ENCODE measurements at regions of chr9 and their contacts with region 1.

Region 1: DNA sequence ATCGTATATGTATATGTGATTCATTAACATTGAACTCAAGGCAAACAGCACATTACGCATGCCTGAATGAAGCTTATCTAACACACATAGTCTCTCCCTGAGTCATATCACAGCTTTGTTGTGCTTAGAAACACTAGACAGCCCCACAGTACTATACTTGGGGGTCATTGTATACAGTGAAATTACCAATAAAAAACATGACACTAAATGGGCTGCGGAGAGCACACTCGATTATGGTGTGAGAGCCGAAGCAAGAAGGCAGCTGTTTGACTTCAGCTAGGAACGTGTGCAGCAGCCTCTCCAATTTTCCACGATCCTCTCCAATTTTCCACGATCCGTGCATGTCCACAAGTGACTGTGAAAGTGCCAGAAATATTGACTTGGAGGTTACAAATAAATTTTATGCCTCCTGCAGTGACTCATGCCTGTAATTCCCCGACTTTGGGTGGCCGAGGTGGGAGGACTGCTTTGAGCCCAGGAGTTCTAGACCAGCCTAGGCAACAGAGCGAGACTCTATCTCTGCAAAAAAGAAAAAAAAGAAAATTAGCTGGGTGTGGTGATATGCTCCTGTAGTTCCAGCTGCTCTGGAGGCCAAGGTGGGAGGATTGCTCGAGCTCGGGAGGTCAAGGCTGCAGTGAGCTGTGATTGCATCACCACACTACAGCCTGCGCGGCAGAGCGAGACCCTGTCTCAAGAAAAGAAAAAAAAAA is 102.4 kb downstream of the DAPK1 start:
- DNase-seq: peak; percentile 43 to 96
- H3K4me3 ChIP-seq: peak overlapping the region; percentile 22; the same call in 1 of the 2 replicates
- H3K27ac ChIP-seq: peak overlapping the region; percentile 56
- H3K4me1 ChIP-seq: peaks cover 52% of the 10 kb centered on the region
- H3K27me3 ChIP-seq: no peaks in the 10 kb centered on the region
- CTCF ChIP-seq: no peak

Region 2: DNA sequence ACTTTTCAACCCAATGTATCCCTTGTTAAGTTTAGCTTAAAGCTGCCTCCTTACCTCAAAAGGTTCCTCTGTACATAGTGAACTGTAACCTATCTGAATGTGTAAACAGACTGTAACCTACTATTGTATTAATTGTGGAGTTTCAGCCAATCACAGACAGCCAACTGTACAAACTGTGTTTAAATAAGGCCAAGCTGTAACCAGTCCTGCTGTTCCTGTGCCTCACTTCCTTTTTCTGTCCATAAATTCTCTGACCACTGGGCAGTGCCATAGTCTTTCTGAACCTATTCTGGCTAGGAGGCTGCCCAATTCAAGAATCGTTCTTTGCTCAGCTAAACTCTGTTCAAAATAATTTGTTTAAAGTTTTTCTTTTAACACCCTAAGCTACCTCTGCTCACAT is 177.1 kb before region 1 on chr9:
- CTCF ChIA-PET with region 1: no interaction called
- POLR2A ChIA-PET with region 1: no interaction called
- intact Hi-C with region 1: loop called (anchors 10 kb)
- DNase-seq: no peak
- H3K4me3 ChIP-seq: no peak overlapping the region
- H3K27ac ChIP-seq: no peak overlapping the region
- H3K4me1 ChIP-seq: peaks cover 11% of the 10 kb centered on the region
- H3K27me3 ChIP-seq: no peaks in the 10 kb centered on the region
- CTCF ChIP-seq: no peak

Region 3: GRCh38 chr9:87502436-87503221 is 97.4 kb before region 1 on chr9:
- CTCF ChIA-PET with region 1: no interaction called
- POLR2A ChIA-PET with region 1: interaction called, 8 read pairs
- intact Hi-C with region 1: loop called (anchors 2 kb)
- DNase-seq: peak; percentile 82 to 98
- H3K4me3 ChIP-seq: peak overlapping the region; percentile 29; the same call in 1 of the 2 replicates
- H3K27ac ChIP-seq: peak overlapping the region; percentile 83
- H3K4me1 ChIP-seq: peaks cover 81% of the 10 kb centered on the region
- H3K27me3 ChIP-seq: no peaks in the 10 kb centered on the region
- CTCF ChIP-seq: no peak

Region 4: DNA sequence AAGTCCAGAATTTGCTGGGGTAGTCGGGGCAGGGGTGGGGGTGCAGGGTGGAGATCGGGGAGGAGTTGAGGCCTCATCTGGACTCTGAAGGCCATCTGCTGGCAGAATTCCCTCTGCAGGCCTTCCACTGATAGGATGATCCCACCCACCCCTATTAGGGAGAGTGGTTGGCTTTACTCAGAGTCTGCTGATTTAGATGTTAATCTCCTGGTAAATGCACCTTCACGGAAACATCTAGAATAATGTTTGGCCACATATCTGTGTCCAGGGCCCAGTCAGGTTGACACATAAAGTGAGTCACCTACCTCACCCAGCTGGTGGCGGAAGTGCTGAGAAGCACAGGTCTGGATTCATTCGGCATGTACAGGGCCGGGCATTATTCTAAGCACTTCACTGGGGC is 52.4 kb before region 1 on chr9:
- CTCF ChIA-PET with region 1: no interaction called
- POLR2A ChIA-PET with region 1: interaction called, 3 read pairs
- intact Hi-C with region 1: loop called (anchors 2 kb)
- DNase-seq: peak; percentile 69 to 80
- H3K4me3 ChIP-seq: no peak overlapping the region
- H3K27ac ChIP-seq: no peak overlapping the region
- H3K4me1 ChIP-seq: peaks cover 17% of the 10 kb centered on the region; the same call in 1 of the 2 replicates
- H3K27me3 ChIP-seq: no peaks in the 10 kb centered on the region
- CTCF ChIP-seq: no peak

Region 5: GRCh38 chr9:87570000-87570908 is 29.8 kb before region 1 on chr9:
- CTCF ChIA-PET with region 1: no interaction called
- POLR2A ChIA-PET with region 1: interaction called, 3 read pairs
- intact Hi-C with region 1: loop called (anchors 1 kb)
- DNase-seq: peak in 1 of 2 experiments; percentile 58
- H3K4me3 ChIP-seq: no peak overlapping the region
- H3K27ac ChIP-seq: peak overlapping the region; percentile 65
- H3K4me1 ChIP-seq: peaks cover 39% of the 10 kb centered on the region
- H3K27me3 ChIP-seq: no peaks in the 10 kb centered on the region
- CTCF ChIP-seq: no peak

Region 6: GRCh38 chr9:87615547-87616148 is 15.6 kb after region 1 on chr9:
- CTCF ChIA-PET with region 1: no interaction called
- POLR2A ChIA-PET with region 1: interaction called, 13 read pairs
- intact Hi-C with region 1: no loop called
- DNase-seq: peak; percentile 79 to 87
- H3K4me3 ChIP-seq: peak overlapping the region; percentile 20; the same call in 1 of the 2 replicates
- H3K27ac ChIP-seq: peak overlapping the region; percentile 90
- H3K4me1 ChIP-seq: peaks cover 45% of the 10 kb centered on the region
- H3K27me3 ChIP-seq: no peaks in the 10 kb centered on the region
- CTCF ChIP-seq: no peak; the same call in 1 of the 2 replicates

Region 7: DNA sequence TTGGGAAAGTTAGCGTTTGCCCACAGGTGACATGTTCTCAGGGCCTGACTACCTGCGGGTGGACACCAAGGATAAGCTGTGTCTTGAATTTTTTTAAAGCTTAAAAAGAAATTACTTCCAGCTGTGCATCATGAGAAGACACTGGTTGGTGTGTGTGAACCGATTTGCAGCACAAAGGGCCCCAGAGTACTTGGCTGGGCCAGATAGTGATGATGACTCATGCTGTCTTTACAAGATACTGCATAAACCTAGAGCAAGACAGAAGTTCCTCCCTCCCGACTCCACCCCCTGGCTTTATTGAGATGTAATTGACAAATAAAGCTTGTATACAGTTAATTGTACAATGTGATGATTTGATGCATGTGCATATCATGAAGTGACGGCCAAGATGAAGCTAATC is 1147.7 kb after region 1 on chr9:
- CTCF ChIA-PET with region 1: no interaction called
- POLR2A ChIA-PET with region 1: no interaction called
- intact Hi-C with region 1: no loop called
- DNase-seq: peak; percentile 21 to 39
- H3K4me3 ChIP-seq: no peak overlapping the region
- H3K27ac ChIP-seq: no peak overlapping the region
- H3K4me1 ChIP-seq: peaks cover 23% of the 10 kb centered on the region
- H3K27me3 ChIP-seq: no peaks in the 10 kb centered on the region
- CTCF ChIP-seq: no peak

Region 8: DNA sequence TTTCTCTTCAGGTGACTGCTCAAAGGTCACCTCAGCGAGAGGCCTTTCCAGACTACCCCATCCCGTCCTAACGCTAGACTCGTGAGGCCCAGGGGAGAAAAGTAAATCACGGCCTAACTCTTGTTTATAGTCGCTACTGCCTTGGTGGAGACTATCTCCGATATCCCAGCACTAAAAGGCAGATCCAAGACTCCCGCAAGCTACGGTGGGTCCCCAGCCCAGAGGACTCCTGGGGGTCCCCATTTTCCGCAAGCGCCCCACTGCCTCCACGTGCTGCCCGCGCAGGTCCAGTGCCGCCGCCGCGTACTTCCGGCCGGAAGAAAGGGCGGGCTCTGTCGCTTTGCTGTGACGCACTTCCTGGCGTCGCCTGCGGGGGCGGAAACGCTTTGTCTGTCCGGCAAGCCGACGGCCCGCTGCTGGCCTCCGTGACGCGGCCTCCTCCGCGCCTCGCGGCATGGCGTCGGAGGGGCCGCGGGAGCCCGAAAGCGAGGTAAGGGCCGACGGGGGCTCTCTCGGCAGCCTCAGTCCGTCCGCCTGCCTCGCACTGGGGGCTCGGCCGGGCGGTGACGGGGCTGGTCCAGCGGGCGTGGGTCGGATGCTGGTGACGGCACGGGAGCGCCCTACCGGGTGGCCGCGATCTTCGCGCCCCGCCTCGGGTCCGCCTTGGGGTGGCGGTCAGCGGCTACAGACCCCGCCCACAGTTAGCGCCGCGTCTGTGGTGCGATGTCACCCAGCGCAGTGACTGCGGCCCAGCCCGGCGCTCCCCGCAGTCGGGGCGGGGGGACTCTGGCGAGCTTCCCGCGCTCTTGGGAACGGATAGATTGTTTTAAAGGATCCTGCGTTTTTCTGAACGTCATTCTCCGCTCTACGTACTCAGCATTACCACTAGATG is 1718.3 kb after region 1 on chr9 and contains the start of gene SECISBP2:
- CTCF ChIA-PET with region 1: no interaction called
- POLR2A ChIA-PET with region 1: no interaction called
- intact Hi-C with region 1: no loop called
- DNase-seq: peak; percentile 89 to 99
- H3K4me3 ChIP-seq: peak within 1 kb of the TSS; percentile 72
- H3K27ac ChIP-seq: peak within 1 kb of the TSS; percentile 93
- H3K4me1 ChIP-seq: peaks cover 54% of the 10 kb centered on the region
- H3K27me3 ChIP-seq: no peaks in the 10 kb centered on the region
- CTCF ChIP-seq: peak; percentile 74
- total RNA-seq, gene SECISBP2: 33.3 and 41.4 TPM in 2 replicates